ENCODE measurements at regions of chr19 and their contacts with region 1.

Region 1: GRCh38 chr19:10269333-10270179 is 1.4 kb upstream of the ICAM1 start:
- DNase-seq: peak; percentile 97
- H3K4me3 ChIP-seq: peak overlapping the region; percentile 57 to 75 (median 67)
- H3K27ac ChIP-seq: peak overlapping the region; percentile 78 to 99 (median 98)
- H3K4me1 ChIP-seq: peaks cover 7 to 92% (median 56%) of the 10 kb centered on the region in 6 donors
- H3K27me3 ChIP-seq: no peaks in the 10 kb centered on the region
- CTCF ChIP-seq: peak; percentile 87 to 98 (median 96)
- POLR2A ChIP-seq: no peak

Region 2: DNA sequence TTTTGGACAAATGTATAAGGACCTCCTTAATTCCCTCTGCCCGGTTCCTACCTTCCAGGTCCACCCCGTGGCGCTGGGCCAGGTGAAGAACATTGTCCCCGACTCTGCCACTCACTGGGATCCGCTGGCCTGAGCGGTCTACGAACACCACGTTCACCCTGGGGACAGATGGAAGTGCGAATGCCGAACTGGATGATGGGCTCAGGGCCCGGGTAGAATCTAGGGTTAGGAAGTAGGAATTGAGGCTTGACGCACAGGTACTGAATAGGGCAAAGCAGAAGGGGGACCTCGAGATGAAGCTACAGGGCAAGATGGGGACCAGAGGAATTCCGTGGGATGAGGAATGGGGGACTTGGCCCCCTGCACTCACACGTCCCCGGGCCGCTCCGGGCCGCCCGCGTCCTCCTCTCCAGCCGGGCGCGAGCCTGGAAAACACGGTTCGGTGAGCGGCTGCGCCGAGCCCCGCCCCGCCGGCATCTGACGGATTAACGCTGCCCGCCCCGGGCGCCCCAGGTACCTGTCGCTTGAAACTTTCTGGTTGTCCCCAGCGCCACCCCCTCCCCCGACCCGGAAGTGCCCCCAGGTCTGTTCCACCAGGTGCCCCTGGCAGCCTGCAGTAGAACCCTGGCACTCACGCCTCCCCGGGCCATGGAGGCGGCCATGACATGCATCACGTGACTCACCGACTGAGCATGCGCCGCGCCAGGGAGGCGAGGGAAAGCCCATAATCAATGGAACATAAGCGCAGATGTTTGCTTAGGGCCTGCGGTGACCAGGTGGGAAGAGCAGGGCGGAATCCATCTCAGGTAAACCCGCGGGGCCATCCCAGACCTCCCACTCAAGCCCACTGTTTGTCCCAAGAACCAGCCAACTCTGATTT is 46.0 kb after region 1 on chr19 and contains the start of gene FDX2:
- intact Hi-C with region 1: no loop called
- DNase-seq: peak; percentile 95
- H3K4me3 ChIP-seq: peak within 1 kb of the TSS; percentile 81 to 99 (median 96)
- H3K27ac ChIP-seq: peak within 1 kb of the TSS in 6 of 8 donors; percentile 26 to 80 (median 66)
- H3K4me1 ChIP-seq: peaks cover 12 to 26% (median 21%) of the 10 kb centered on the region in 6 donors
- H3K27me3 ChIP-seq: no peaks in the 10 kb centered on the region
- CTCF ChIP-seq: no peak
- POLR2A ChIP-seq: no peak
- total RNA-seq, gene FDX2: 9.1 to 28.1 (median 11.2) TPM

Region 3: DNA sequence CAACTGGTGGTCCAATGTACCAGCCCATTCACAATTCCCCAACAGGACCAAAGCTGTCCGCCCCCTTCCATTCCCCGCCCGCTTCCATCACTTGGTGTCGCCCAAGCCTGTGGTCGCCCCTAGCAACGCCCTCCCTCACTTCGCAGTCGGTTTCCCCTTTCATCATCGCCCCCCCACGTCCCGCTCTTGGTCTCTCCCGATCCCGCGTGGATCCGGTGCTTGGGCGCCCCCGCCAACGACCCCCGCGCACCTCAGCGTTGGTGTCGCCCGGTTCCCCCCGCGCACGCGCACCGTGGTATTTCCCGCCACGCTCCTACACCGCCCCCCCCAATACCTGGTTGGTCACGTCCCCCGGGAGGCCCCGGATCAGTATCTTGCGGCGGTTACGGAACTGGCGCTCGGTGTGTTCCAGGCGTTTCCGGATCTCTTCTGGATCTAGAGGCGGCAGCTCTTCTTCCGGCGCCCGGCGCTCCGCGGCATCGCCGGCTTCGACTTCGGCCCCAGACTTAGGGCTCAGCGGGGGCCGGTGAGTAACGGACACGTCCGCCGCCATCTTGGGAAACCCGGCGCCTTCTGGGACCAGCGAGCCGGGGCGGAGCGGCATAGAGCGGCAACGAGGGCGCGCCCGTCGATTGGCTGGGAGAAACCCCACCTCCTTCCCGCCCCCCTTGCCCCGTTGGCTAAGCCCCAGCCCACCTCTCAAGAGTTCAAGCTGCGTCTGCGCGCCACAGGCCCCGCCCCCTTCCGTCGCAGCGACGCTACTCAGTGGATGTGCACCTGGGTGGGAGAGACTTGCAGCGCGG is 63.6 kb after region 1 on chr19 and contains the start of gene RAVER1:
- intact Hi-C with region 1: loop called (anchors 10 kb)
- DNase-seq: peak; percentile 99
- H3K4me3 ChIP-seq: peak within 1 kb of the TSS; percentile 58 to 91 (median 82)
- H3K27ac ChIP-seq: peak within 1 kb of the TSS; percentile 87 to 95 (median 92)
- H3K4me1 ChIP-seq: peaks cover 12 to 74% (median 42%) of the 10 kb centered on the region in 6 donors
- H3K27me3 ChIP-seq: no peaks in the 10 kb centered on the region
- CTCF ChIP-seq: peak in 2 of 11 experiments; percentile 24 to 31
- POLR2A ChIP-seq: peak in 1 of 3 donors; percentile 11
- total RNA-seq, gene RAVER1: 33.1 to 45.1 (median 40.3) TPM

Region 4: GRCh38 chr19:10388957-10389356 is 119.4 kb after region 1 on chr19:
- intact Hi-C with region 1: loop called (anchors 2 kb)
- DNase-seq: peak; percentile 93
- H3K4me3 ChIP-seq: no peak overlapping the region
- H3K27ac ChIP-seq: peak overlapping the region in 1 of 8 donors; percentile 28
- H3K4me1 ChIP-seq: peaks cover 0 to 34% (median 10%) of the 10 kb centered on the region in 6 donors
- H3K27me3 ChIP-seq: no peaks in the 10 kb centered on the region
- CTCF ChIP-seq: peak; percentile 86 to 97 (median 92)
- POLR2A ChIP-seq: no peak

Measured in spleen (tissue), 13 donors.